SK-N-SH (cell line): ENCODE measurements at regions of chr17 and their contacts with region 1.

Region 1: DNA sequence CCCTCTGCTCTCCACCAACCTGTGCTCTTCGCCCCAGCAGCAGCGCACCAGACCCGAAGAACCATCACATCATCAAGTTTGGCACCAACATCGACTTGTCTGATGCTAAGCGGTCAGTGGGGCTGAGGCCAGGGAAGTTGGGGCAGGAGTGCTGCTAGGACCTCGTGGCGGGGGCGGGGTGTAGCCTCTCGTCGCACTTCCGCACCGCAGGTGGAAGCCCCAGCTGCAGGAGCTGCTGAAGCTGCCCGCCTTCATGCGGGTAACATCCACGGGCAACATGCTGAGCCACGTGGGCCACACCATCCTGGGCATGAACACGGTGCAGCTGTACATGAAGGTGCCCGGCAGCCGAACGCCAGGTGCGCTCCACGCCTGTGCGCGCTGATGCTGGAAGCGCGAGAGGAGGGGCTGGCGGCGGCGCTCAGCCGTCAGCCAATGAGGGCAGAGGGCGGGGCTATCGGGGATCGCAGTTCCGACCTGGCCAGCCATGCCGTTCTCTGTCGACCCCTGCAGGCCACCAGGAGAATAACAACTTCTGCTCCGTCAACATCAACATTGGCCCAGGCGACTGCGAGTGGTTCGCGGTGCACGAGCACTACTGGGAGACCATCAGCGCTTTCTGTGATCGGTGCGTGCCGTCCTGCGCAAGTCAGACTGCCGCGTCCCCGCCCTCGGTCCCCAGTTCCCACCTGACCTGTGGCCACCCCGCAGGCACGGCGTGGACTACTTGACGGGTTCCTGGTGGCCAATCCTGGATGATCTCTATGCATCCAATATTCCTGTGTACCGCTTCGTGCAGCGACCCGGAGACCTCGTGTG is 3.2 kb upstream of the TMEM88 start:
- DNase-seq: peak; percentile 94
- H3K4me3 ChIP-seq: peak overlapping the region in 1 of 2 experiments; percentile 3; a peak in 1 of 4 replicates
- H3K27ac ChIP-seq: peak overlapping the region in 1 of 2 experiments; percentile 34; a peak in 1 of 4 replicates
- H3K4me1 ChIP-seq: peaks cover 13 to 27% of the 10 kb centered on the region in 2 experiments; a peak in 2 of 4 replicates
- H3K27me3 ChIP-seq: no peaks in the 10 kb centered on the region
- CTCF ChIP-seq: peak; percentile 87
- EP300 ChIP-seq: no peak
- RAD21 ChIP-seq: peak; percentile 95

Region 2: DNA sequence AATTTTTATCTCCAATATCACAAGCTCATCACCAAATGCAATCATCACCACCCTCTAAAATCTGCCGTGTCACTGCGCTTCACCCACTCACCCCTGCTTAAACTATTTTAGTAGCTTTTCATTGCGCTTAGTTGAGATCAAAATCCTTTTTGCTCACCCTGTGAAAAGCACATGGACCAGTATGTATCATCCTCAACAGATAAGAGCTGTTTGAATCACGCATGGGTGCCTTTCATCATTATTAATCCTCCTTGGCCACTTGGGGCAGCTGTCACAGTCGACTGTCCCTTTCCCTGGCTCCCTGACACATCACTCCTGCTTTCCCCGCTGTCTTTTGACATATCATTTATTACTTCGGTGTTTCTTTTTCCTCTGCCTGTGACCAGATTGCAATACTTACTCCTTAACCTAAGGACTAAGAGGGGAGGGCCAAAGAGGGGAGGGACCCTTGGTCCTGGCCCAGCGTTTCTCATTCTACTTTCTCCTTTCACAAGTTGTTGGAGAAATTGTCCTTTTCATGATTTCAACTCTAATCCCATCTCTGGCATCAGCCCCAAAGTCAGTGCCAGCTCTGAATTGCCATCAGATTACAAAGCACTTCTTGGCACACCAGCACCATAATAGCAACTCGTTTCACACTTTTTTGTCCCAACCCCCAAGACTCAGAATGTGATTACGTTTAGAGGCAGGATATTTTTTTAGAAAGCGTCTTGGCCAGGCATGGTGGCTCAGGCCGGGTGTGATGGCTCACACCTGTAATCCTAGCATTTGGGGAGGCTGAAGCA is 26.2 kb before region 1 on chr17:
- CTCF ChIA-PET with region 1: interaction called, 44 read pairs
- POLR2A ChIA-PET with region 1: interaction called, 3 read pairs
- DNase-seq: peak; percentile 69
- H3K4me3 ChIP-seq: no peak overlapping the region
- H3K27ac ChIP-seq: no peak overlapping the region
- H3K4me1 ChIP-seq: peaks cover 0 to 12% of the 10 kb centered on the region in 2 experiments; a peak in 1 of 4 replicates
- H3K27me3 ChIP-seq: peaks cover 2% of the 10 kb centered on the region
- CTCF ChIP-seq: peak; percentile 40
- EP300 ChIP-seq: no peak
- RAD21 ChIP-seq: peak; percentile 28; the same call in 1 of the 2 replicates

Region 3: GRCh38 chr17:7834962-7835813 is 16.5 kb before region 1 on chr17:
- CTCF ChIA-PET with region 1: interaction called, 58 read pairs
- POLR2A ChIA-PET with region 1: interaction called, 17 read pairs
- DNase-seq: peak; percentile 92
- H3K4me3 ChIP-seq: peak overlapping the region; percentile 90 to 97
- H3K27ac ChIP-seq: peak overlapping the region; percentile 98 to 99
- H3K4me1 ChIP-seq: peaks cover 21 to 27% of the 10 kb centered on the region in 2 experiments
- H3K27me3 ChIP-seq: peaks cover 7% of the 10 kb centered on the region; the same call in 1 of the 2 replicates
- CTCF ChIP-seq: peak; percentile 77
- EP300 ChIP-seq: no peak; a peak in 2 of 4 replicates
- RAD21 ChIP-seq: peak; percentile 75